Left ventricle myocardium superior (tissue), 1 donor: ENCODE measurements at regions of chr12 and their contacts with region 1.

Region 1: DNA sequence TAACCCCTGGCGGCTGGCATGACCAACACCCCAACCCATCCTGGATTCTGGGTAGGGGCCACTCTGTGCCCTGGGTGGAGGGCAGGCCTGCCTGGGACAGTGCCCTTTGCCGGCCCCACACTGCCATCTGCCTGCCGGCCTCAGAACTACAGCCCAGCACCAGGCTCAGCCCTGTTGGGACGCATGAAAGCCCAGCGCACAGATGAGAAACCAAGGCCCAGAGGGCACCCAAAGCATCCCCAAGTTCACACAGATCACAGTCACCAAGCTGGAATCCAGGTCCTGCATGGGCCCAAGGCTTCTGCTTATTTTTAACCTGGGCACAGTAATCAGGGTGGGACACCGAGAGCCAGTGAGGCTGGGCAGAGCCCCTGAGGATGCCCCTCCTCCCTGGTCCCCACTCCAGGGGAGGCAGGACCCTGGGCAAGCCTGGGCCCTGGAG is 26.2 kb downstream of the RFLNA start:
- DNase-seq: peak; percentile 82
- ATAC-seq: peak; percentile 78

Region 2: GRCh38 chr12:123050331-123050831 is 1270.7 kb before region 1 on chr12:
- intact Hi-C with region 1: no loop called
- DNase-seq: peak; percentile 69
- ATAC-seq: peak; percentile 97

Region 3: DNA sequence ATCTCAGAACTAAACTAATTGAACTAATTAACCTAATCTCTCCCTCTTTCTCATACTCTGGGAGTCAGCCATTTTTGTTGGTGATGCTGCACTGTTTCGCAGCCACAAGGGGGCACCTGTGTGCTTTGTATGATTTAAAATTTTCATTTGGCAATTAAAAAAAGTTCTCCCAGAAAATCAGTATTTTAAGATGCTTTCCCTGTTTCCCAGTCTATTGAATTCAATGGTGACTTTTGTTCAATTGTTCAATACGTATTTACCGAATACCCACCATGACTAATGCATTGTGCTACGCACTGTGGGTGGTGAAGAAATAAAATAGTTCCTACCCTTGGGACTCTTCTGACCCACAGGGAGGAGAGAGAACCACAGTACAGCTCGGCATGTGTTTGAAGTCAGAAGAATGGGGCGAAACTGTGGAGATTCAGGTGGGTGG is 284.4 kb before region 1 on chr12:
- intact Hi-C with region 1: loop called (anchors 5 kb)
- DNase-seq: peak; percentile 58
- ATAC-seq: peak; percentile 50

Region 4: GRCh38 chr12:124053851-124054250 is 267.2 kb before region 1 on chr12:
- intact Hi-C with region 1: loop called (anchors 5 kb)
- DNase-seq: peak; percentile 45
- ATAC-seq: peak; percentile 91